ENCODE measurements at regions of chr3 and their contacts with region 1.

Region 1: GRCh38 chr3:40008796-40009195 is 199.4 kb downstream of the MYRIP start:
- DNase-seq: no peak
- H3K4me3 ChIP-seq: no peak overlapping the region
- H3K27ac ChIP-seq: no peak overlapping the region
- H3K4me1 ChIP-seq: no peaks in the 10 kb centered on the region
- H3K27me3 ChIP-seq: no peaks in the 10 kb centered on the region
- CTCF ChIP-seq: no peak
- EP300 ChIP-seq: no peak
- POLR2A ChIP-seq: no peak

Region 2: DNA sequence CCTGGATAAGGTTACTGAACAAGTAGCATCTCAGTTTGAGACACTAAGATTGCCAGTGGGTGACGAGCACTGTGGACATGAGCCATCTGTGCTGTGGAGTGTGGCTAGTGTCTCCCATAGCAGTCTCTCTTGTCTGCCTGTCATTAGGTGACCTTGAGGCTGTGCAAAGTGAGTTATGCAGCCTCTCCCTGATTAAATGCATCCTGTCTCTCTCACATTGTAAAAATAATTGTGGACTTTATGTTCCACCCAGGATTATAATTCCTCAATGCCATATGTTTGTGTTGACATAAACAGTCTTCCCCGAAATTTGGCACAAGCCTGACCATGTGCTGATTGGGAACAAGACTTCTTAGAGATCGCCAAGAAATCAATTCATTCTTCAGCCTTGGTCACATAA is 30.5 kb before region 1 on chr3:
- in situ Hi-C with region 1: no loop called
- intact Hi-C with region 1: loop called (anchors 1 kb)
- DNase-seq: no peak
- H3K4me3 ChIP-seq: no peak overlapping the region
- H3K27ac ChIP-seq: no peak overlapping the region
- H3K4me1 ChIP-seq: no peaks in the 10 kb centered on the region
- H3K27me3 ChIP-seq: no peaks in the 10 kb centered on the region
- CTCF ChIP-seq: no peak
- EP300 ChIP-seq: no peak
- POLR2A ChIP-seq: no peak